Heart left ventricle (tissue), 16 donors: ENCODE measurements at regions of chr2 and their contacts with region 1.

Region 1: GRCh38 chr2:206556357-206556949 is 85.8 kb upstream of the FAM237A start:
- DNase-seq: no peak
- ATAC-seq: peak in 1 of 4 donors; percentile 59
- H3K4me3 ChIP-seq: no peak overlapping the region
- H3K27ac ChIP-seq: no peak overlapping the region
- H3K4me1 ChIP-seq: no peaks in the 10 kb centered on the region
- H3K27me3 ChIP-seq: no peaks in the 10 kb centered on the region
- CTCF ChIP-seq: peak; percentile 28 to 61 (median 46)
- POLR2A ChIP-seq: no peak

Region 2: DNA sequence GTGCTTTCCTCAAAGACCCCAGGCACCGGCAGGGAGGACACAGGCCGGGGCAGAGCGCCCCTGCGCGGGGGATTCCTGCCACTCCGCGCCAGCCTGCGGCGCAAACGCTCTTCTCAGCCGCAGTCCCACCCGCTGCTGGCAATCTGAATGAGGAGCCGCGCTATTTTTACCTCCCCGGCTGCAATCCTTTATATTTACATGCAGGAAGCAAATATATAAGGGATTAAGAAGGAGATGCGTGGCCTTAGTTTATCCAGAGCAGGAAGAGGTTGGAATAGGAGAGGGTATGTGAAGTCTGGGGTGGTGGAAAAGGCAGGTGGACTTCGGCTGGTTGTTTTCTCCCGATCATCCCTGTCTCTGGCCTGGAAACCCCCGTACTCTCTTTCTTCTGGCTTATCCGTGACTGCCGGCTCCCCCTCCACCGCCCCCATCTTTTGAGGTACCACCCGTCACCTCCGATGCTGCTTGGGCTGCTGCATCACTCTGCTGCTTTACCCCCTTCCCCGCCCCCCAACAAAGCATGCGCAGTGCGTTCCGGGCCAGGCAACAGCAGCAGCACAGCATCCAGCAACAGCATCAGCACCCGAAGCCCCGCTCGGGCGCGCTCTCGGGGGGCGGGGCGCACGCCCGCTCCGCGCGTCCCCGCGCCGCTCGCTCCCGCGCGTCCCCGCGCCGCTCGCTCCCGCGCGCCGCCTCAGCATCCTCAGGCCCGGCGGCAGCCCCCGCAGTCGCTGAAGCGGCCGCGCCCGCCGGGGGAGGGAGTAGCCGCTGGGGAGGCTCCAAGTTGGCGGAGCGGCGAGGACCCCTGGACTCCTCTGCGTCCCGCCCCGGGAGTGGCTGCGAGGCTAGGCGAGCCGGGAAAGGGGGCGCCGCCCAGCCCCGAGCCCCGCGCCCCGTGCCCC is 113.4 kb before region 1 on chr2 and contains the start of gene ADAM23:
- intact Hi-C with region 1: loop called in 2 of 10 experiments (anchors 2 kb)
- DNase-seq: peak; percentile 48 to 76 (median 66)
- ATAC-seq: peak; percentile 73 to 89 (median 88)
- H3K4me3 ChIP-seq: peak within 1 kb of the TSS; percentile 41 to 90 (median 64)
- H3K27ac ChIP-seq: peak within 1 kb of the TSS; percentile 4 to 86 (median 75)
- H3K4me1 ChIP-seq: peaks cover 0 to 37% (median 7%) of the 10 kb centered on the region in 12 donors
- H3K27me3 ChIP-seq: peaks cover 0 to 45% (median 8%) of the 10 kb centered on the region in 9 donors
- CTCF ChIP-seq: peak in 6 of 12 donors; percentile 8 to 53 (median 38)
- POLR2A ChIP-seq: peak in 1 of 2 donors; percentile 54
- total RNA-seq, gene ADAM23: 36.0 to 87.4 (median 71.3) TPM

Region 3: DNA sequence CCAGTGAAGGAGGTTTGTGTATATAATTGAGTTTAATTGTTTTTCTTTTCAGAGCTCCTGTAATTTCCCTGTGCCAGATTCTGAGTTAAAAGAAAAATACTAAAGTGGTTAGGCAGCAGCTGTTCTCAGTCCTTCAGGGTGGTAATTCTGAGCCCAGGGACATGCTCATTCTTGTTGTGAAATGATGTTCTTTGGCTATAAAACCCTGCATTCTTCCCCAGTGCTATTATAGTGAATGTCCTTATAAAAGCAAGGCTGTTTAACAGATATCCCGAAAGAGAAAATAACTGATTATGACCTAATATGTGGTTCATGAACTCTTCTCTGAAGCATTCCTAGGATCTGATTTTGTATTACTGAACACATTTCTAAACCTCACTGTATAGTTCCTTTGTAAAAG is 79.2 kb before region 1 on chr2:
- intact Hi-C with region 1: no loop called
- DNase-seq: no peak
- ATAC-seq: peak in 2 of 4 donors; percentile 49 to 61
- H3K4me3 ChIP-seq: no peak overlapping the region
- H3K27ac ChIP-seq: no peak overlapping the region
- H3K4me1 ChIP-seq: peaks cover 0 to 12% (median 2%) of the 10 kb centered on the region in 12 donors
- H3K27me3 ChIP-seq: peaks cover 0 to 4% (median 0%) of the 10 kb centered on the region in 9 donors
- CTCF ChIP-seq: no peak
- POLR2A ChIP-seq: no peak

Region 4: DNA sequence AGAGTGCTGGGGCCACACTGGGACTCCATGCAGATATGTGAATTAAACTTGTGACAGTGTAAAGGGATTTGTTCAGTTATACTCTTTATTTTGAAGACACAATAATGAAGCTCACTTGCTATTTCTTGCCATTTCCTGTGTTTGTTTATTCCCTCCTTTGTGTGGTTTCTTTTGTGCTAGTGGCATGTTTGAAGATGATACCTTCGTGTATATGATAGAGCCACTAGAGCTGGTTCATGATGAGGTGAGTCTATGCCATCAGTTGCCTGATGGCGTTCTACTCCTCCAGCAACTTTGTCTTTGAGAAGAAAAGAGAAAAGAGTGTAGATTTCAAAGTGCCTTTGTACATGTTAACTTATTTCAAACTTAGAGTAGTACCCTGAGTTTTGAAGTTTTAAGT is 13.4 kb before region 1 on chr2:
- intact Hi-C with region 1: no loop called
- DNase-seq: no peak
- ATAC-seq: no peak
- H3K4me3 ChIP-seq: no peak overlapping the region
- H3K27ac ChIP-seq: no peak overlapping the region
- H3K4me1 ChIP-seq: peaks cover 0 to 5% (median 0%) of the 10 kb centered on the region in 12 donors
- H3K27me3 ChIP-seq: no peaks in the 10 kb centered on the region
- CTCF ChIP-seq: no peak
- POLR2A ChIP-seq: no peak